Naive thymus-derived CD4-positive, alpha-beta T cell (primary cell): ENCODE measurements at regions of chr19 and their contacts with region 1.

Region 1: GRCh38 chr19:51108066-51108804 is at the start of gene CTU1:
- DNase-seq: peak; percentile 93 to 99 (median 98)
- ATAC-seq: peak; percentile 99
- H3K4me3 ChIP-seq: peak within 1 kb of the TSS; percentile 92
- H3K4me3 Mint-ChIP-seq: peak within 1 kb of the TSS; percentile 90 to 100 (median 98)
- H3K27ac ChIP-seq: peak within 1 kb of the TSS; percentile 77
- H3K27ac Mint-ChIP-seq: peak within 1 kb of the TSS; percentile 92 to 99 (median 97)
- H3K4me1 ChIP-seq: peaks cover 13% of the 10 kb centered on the region in 2 donors
- H3K4me1 Mint-ChIP-seq: peaks cover 28 to 48% (median 42%) of the 10 kb centered on the region in 7 donors
- H3K27me3 ChIP-seq: no peaks in the 10 kb centered on the region
- H3K27me3 Mint-ChIP-seq: no peaks in the 10 kb centered on the region
- total RNA-seq, gene CTU1: 3.3 to 11.8 (median 10.5) TPM

Region 2: DNA sequence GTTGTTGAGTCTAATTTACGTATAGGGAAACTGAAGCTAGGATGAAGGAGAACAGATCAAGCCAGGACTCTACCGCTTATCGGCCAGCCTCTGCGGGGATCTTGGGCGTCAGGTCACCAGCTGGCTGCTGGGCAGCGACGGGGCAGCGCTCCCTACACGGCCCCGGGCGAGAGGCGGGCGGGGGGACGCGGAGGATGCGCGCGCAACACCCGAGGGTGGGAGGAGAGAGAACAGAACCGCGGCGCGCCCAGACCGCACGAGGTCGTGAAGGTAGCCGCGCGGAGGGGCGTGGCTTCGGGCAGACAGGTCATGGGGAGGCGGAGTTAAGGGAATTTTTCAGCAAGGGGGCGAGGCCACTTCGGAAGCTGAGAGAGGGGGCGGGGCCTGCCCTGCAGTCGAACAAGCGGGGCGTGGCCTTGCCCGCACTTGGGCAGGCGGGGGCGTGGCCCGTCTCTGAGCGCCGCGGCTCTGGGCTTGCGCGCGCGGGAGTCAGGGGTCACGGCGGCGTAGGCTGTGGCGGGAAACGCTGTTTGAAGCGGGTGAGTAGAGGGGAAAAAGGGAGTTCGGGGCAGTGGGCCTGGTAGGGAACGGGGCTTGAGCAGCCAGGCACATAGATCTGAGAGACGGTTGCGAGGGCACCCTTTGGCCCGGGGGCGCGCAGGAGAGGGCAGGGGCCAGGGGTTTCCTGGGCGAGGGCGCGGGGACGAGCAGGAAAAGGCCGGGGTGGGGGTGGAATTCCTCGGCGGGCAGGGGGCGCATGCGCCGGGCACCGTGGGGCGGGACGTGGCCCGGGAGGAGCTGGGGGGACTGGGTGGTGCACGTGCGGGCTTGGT is 724.2 kb before region 1 on chr19 and contains the start of gene POLD1:
- CTCF ChIA-PET with region 1: no interaction called
- POLR2A ChIA-PET with region 1: no interaction called
- intact Hi-C with region 1: loop called in 1 of 2 experiments (anchors 1 kb)
- DNase-seq: peak; percentile 98 to 100 (median 99)
- ATAC-seq: peak; percentile 96
- H3K4me3 ChIP-seq: peak within 1 kb of the TSS; percentile 74
- H3K4me3 Mint-ChIP-seq: peak within 1 kb of the TSS; percentile 91 to 99 (median 94)
- H3K27ac ChIP-seq: peak within 1 kb of the TSS; percentile 75
- H3K27ac Mint-ChIP-seq: peak within 1 kb of the TSS; percentile 80 to 97 (median 94)
- H3K4me1 ChIP-seq: peaks cover 3 to 7% of the 10 kb centered on the region in 2 donors
- H3K4me1 Mint-ChIP-seq: peaks cover 16 to 51% (median 35%) of the 10 kb centered on the region in 7 donors
- H3K27me3 ChIP-seq: no peaks in the 10 kb centered on the region
- H3K27me3 Mint-ChIP-seq: no peaks in the 10 kb centered on the region
- total RNA-seq, gene POLD1: 26.0 to 110 (median 40.8) TPM

Region 3: DNA sequence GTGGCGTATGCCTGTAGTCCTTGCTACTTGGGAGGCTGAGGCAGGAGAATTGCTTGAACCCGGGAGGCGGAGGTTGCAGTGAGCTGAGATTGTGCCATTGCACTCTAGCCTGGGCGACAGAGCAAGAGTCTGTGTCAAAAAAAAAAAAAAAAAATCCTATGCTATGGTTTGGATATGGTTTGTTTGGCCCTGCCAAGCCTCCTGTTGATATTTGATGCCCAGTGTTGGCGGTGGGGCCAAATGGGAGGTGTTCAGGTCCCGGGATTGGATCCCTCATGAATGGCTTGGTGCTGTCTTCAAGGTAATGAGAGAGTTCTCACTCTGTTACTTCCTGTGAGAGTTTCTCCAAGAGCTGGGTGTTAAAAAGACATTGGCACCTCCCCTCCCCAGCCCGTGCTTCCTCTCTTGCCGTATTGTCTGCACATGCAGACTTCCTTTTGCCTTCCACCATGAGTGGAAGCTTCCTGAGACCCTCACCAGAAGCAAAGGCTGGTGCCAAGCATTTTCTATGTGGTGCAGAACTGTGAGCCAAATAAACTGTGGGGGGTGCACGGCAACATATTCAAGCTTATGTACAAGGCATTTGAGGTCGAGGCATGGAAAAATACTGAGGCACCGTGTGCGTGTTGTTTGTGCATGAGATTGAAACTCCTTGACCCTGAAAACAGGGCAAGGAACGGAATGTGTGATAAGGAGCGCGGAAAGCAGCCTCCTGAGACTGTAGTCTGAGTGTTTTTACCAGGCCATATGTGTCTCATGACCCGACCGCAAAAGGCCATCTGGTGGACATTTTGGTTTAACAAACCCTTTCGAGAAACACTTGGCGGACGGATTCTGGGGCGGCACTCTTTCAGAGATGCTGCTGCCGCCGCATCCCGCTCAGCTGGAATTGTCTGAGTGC is 23.8 kb after region 1 on chr19:
- CTCF ChIA-PET with region 1: interaction called, 5 read pairs
- POLR2A ChIA-PET with region 1: interaction called, 9 read pairs
- intact Hi-C with region 1: loop called in 1 of 2 experiments (anchors 1 kb)
- DNase-seq: peak in 7 of 9 donors; percentile 28 to 58 (median 50)
- ATAC-seq: peak; percentile 73
- H3K4me3 ChIP-seq: peak overlapping the region; percentile 44
- H3K4me3 Mint-ChIP-seq: peak overlapping the region; percentile 69 to 90 (median 83)
- H3K27ac ChIP-seq: peak overlapping the region; percentile 48
- H3K27ac Mint-ChIP-seq: peak overlapping the region; percentile 82 to 97 (median 93)
- H3K4me1 ChIP-seq: peaks cover 55 to 62% of the 10 kb centered on the region in 2 donors
- H3K4me1 Mint-ChIP-seq: peaks cover 41 to 82% (median 68%) of the 10 kb centered on the region in 7 donors
- H3K27me3 ChIP-seq: no peaks in the 10 kb centered on the region
- H3K27me3 Mint-ChIP-seq: peaks cover 0 to 2% (median 0%) of the 10 kb centered on the region in 5 donors

Region 4: DNA sequence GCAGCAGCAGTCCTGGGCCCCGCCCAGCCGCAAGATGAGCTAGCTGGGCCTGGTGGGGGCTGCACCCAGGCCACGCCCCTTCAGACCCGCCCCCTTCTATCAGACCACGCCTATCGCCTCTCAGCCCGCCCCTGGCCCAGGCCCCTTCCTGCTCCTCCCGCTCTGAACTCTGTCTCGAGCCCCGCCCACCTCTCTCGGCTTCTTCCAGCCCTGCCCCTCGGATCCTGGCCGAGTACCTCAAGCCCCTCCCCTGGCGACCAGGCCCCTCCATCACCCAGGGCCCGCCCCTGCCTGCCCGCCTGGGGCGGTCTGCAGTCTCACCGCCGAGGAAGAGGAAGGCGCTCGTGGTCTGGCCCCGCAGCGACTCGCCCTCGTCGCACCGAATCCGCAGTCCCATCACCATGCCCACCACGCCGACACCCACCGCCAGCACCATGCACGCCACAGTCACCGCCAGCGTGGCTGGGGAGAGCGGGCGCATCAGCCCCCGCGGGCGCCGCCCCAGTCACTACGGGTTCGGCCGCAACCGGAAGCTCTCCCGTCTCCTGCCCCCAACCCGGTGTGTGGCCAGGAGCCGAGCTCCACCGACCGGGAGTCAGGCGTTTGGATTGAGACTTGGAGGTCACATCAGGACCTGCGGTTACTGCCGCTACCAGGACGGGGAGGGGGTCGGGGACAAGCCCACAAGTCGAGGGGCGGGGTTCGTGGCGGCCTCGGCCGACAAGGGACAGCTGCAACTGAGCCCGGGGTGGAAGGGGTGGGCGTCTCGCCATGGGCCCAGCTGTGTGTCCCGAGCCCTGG is 259.5 kb after region 1 on chr19:
- CTCF ChIA-PET with region 1: no interaction called
- POLR2A ChIA-PET with region 1: no interaction called
- intact Hi-C with region 1: loop called (anchors 1 kb)
- DNase-seq: peak; percentile 84 to 100 (median 90)
- ATAC-seq: peak; percentile 93
- H3K4me3 ChIP-seq: peak overlapping the region; percentile 96
- H3K4me3 Mint-ChIP-seq: peak overlapping the region; percentile 92 to 100 (median 98)
- H3K27ac ChIP-seq: peak overlapping the region; percentile 81
- H3K27ac Mint-ChIP-seq: peak overlapping the region; percentile 79 to 98 (median 95)
- H3K4me1 ChIP-seq: peaks cover 23 to 26% of the 10 kb centered on the region in 2 donors
- H3K4me1 Mint-ChIP-seq: peaks cover 53 to 81% (median 59%) of the 10 kb centered on the region in 7 donors
- H3K27me3 ChIP-seq: no peaks in the 10 kb centered on the region
- H3K27me3 Mint-ChIP-seq: no peaks in the 10 kb centered on the region

Region 5: DNA sequence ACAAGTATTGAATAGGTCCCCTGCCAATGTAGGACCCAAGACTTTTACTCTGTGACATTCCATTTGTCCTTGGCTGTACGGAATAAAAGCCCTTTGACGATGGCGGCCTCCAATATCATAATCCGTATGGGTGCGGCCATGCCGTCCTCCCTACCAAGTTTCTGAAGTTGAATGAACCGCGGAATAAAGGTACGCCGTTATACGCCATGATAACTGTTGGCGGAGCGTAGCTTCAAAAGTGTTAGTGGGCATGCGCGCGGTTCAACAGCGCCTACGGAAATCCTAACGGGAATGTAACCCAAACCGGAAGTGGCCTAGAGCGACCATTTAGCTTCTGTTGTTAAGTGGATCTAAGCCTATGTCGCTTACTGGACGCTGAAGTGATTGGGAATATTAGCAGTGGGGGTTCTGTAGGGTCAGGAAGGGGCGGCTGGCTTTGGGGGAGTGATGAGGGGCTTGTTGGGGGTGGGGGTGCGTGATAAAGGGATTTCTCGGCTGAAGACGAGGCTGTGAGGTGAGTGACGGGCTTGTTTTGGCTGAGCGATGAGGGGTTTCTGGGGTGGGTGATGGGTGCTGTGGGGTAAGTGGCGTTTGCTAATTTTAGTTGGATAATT is 462.8 kb after region 1 on chr19 and contains the start of gene ZNF175:
- CTCF ChIA-PET with region 1: no interaction called
- POLR2A ChIA-PET with region 1: no interaction called
- intact Hi-C with region 1: loop called in 1 of 2 experiments (anchors 1 kb)
- DNase-seq: peak; percentile 41 to 79 (median 71)
- ATAC-seq: peak; percentile 96
- H3K4me3 ChIP-seq: peak within 1 kb of the TSS; percentile 84
- H3K4me3 Mint-ChIP-seq: peak within 1 kb of the TSS; percentile 82 to 99 (median 96)
- H3K27ac ChIP-seq: peak within 1 kb of the TSS; percentile 30
- H3K27ac Mint-ChIP-seq: peak within 1 kb of the TSS; percentile 36 to 90 (median 80)
- H3K4me1 ChIP-seq: peaks cover 10 to 11% of the 10 kb centered on the region in 2 donors
- H3K4me1 Mint-ChIP-seq: peaks cover 21 to 45% (median 34%) of the 10 kb centered on the region in 7 donors
- H3K27me3 ChIP-seq: no peaks in the 10 kb centered on the region
- H3K27me3 Mint-ChIP-seq: peaks cover 4 to 18% (median 7%) of the 10 kb centered on the region in 5 donors
- total RNA-seq, gene ZNF175: 6.8 to 19.1 (median 10.2) TPM

Region 6: GRCh38 chr19:51926784-51927742 is 818.8 kb after region 1 on chr19 and contains the start of gene ZNF613:
- CTCF ChIA-PET with region 1: no interaction called
- POLR2A ChIA-PET with region 1: no interaction called
- intact Hi-C with region 1: no loop called
- DNase-seq: peak; percentile 65 to 87 (median 83)
- ATAC-seq: peak; percentile 92
- H3K4me3 ChIP-seq: peak within 1 kb of the TSS; percentile 70
- H3K4me3 Mint-ChIP-seq: peak within 1 kb of the TSS; percentile 90 to 100 (median 97)
- H3K27ac ChIP-seq: peak within 1 kb of the TSS; percentile 77
- H3K27ac Mint-ChIP-seq: peak within 1 kb of the TSS; percentile 87 to 96 (median 92)
- H3K4me1 ChIP-seq: peaks cover 4% of the 10 kb centered on the region in 2 donors
- H3K4me1 Mint-ChIP-seq: peaks cover 19 to 41% (median 36%) of the 10 kb centered on the region in 7 donors
- H3K27me3 ChIP-seq: no peaks in the 10 kb centered on the region
- H3K27me3 Mint-ChIP-seq: no peaks in the 10 kb centered on the region
- total RNA-seq, gene ZNF613: 1.5 to 9.6 (median 5.2) TPM